MCF 10A (cell line): ENCODE measurements at regions of chr11 and their contacts with region 1.

Region 1: DNA sequence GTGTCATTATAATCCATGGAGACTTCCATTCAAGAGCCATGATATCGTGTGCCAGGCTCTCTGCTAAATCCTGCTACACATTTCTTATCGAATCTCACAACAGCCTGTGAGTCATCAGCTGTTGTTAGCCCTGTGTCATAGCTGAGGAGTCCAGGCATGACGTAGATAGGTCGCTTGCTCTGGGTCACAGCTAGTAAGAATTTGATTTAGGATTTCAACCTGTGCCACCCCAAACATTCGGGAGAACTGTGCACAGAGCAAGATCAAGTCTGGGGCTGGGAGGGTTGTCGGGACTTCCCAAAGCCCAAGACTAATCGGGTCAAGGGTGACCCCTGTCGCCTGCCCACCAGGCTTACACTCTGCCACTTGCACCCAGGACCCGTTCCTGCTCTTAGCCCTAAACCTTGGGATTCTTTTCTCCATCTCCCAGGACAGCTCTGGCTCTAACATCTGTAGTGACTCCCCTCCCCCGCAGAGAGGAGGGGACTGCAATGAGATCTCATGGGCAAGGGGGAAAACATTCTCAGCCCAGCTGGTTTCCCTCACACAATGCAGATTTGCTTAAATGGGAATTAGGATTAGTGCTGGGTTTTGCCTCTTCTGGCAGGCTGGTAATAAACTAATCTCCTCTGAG is 34.3 kb downstream of the TSPAN18 start:
- DNase-seq: peak; percentile 77
- H3K4me3 Mint-ChIP-seq: no peak overlapping the region
- H3K27ac Mint-ChIP-seq: no peak overlapping the region
- H3K4me1 Mint-ChIP-seq: peaks cover 5% of the 10 kb centered on the region
- H3K27me3 Mint-ChIP-seq: peaks cover 25% of the 10 kb centered on the region
- CTCF ChIP-seq: no peak

Region 2: GRCh38 chr11:44680982-44681597 is 79.9 kb before region 1 on chr11:
- CTCF ChIA-PET with region 1: no interaction called
- POLR2A ChIA-PET with region 1: no interaction called
- intact Hi-C with region 1: no loop called
- DNase-seq: peak; percentile 74
- H3K4me3 Mint-ChIP-seq: no peak overlapping the region
- H3K27ac Mint-ChIP-seq: no peak overlapping the region
- H3K4me1 Mint-ChIP-seq: peaks cover 10% of the 10 kb centered on the region
- H3K27me3 Mint-ChIP-seq: peaks cover 2% of the 10 kb centered on the region
- CTCF ChIP-seq: no peak

Region 3: GRCh38 chr11:44711787-44712608 is 49.0 kb before region 1 on chr11:
- CTCF ChIA-PET with region 1: no interaction called
- POLR2A ChIA-PET with region 1: no interaction called
- intact Hi-C with region 1: no loop called
- DNase-seq: no peak
- H3K4me3 Mint-ChIP-seq: no peak overlapping the region
- H3K27ac Mint-ChIP-seq: no peak overlapping the region
- H3K4me1 Mint-ChIP-seq: peaks cover 16% of the 10 kb centered on the region
- H3K27me3 Mint-ChIP-seq: no peaks in the 10 kb centered on the region
- CTCF ChIP-seq: no peak

Region 4: GRCh38 chr11:44775366-44775984 is 14.4 kb after region 1 on chr11:
- CTCF ChIA-PET with region 1: interaction called, 11 read pairs
- POLR2A ChIA-PET with region 1: no interaction called
- intact Hi-C with region 1: no loop called
- DNase-seq: peak; percentile 74
- H3K4me3 Mint-ChIP-seq: no peak overlapping the region
- H3K27ac Mint-ChIP-seq: no peak overlapping the region
- H3K4me1 Mint-ChIP-seq: peaks cover 14% of the 10 kb centered on the region
- H3K27me3 Mint-ChIP-seq: no peaks in the 10 kb centered on the region
- CTCF ChIP-seq: peak; percentile 70

Region 5: GRCh38 chr11:44785856-44786606 is 25.0 kb after region 1 on chr11:
- CTCF ChIA-PET with region 1: no interaction called
- POLR2A ChIA-PET with region 1: no interaction called
- intact Hi-C with region 1: no loop called
- DNase-seq: no peak
- H3K4me3 Mint-ChIP-seq: no peak overlapping the region
- H3K27ac Mint-ChIP-seq: no peak overlapping the region
- H3K4me1 Mint-ChIP-seq: peaks cover 2% of the 10 kb centered on the region
- H3K27me3 Mint-ChIP-seq: peaks cover 27% of the 10 kb centered on the region
- CTCF ChIP-seq: no peak

Region 6: DNA sequence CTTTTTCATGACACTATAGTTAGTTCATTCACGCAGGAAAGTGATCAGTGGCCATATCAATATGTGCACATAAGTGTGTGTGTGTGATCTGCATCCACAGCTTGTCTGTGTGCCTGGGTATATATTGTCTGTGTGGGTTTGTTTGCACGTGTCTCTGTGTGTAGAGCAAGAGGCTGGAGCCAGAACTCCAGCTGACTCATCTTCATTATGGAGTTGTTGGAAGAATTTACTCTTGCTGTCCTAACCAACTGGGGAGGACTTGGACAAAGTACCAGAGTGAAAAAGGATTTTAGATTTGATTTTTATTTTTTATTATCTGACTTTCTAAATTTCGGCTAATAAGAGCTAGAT is 125.7 kb after region 1 on chr11:
- CTCF ChIA-PET with region 1: no interaction called
- POLR2A ChIA-PET with region 1: no interaction called
- intact Hi-C with region 1: no loop called
- DNase-seq: peak; percentile 22
- H3K4me3 Mint-ChIP-seq: no peak overlapping the region
- H3K27ac Mint-ChIP-seq: no peak overlapping the region
- H3K4me1 Mint-ChIP-seq: peaks cover 10% of the 10 kb centered on the region
- H3K27me3 Mint-ChIP-seq: peaks cover 45% of the 10 kb centered on the region
- CTCF ChIP-seq: no peak